ENCODE measurements at regions of chr5 and their contacts with region 1.

Region 1: DNA sequence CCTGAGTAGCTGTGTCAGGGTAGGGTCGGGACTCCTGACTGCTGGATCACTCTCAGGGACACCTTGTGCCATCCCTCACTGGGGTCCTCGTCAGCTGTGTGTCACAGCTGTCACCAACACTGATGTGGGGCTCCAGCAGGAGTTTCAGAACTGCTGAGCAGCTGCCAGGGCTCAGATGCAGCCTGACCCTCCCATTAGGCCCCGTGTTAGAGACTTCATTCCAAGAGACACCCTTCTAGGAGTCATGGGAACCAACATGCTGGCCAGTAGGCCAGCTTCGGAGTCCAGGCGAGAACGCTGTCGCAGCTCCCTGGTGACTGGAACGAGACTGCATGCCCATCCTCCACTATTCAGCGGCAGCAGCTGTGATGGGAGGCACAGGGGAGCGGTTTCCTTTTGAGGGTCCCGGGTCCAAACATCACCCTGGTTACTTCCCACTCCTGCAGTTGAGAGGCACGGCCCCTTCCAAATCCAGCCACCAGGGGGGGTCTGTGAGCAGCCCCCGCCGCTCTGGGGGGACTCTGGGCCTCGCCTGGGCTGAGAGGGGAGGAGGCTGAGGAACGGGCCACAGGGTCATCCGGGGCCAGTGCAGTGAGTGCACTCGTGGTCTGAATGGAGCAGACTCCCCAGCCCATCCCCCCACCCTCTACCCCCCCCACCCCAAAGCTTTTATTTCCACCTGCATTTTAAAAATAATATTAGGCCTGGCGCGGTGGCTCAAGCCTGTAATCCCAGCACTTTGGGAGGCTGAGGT is 12.6 kb upstream of the TCF7 start:
- DNase-seq: peak; percentile 67
- H3K4me3 Mint-ChIP-seq: no peak overlapping the region
- H3K27ac Mint-ChIP-seq: no peak overlapping the region
- H3K4me1 Mint-ChIP-seq: peaks cover 7% of the 10 kb centered on the region
- H3K27me3 Mint-ChIP-seq: no peaks in the 10 kb centered on the region
- CTCF ChIP-seq: peak; percentile 99

Region 2: DNA sequence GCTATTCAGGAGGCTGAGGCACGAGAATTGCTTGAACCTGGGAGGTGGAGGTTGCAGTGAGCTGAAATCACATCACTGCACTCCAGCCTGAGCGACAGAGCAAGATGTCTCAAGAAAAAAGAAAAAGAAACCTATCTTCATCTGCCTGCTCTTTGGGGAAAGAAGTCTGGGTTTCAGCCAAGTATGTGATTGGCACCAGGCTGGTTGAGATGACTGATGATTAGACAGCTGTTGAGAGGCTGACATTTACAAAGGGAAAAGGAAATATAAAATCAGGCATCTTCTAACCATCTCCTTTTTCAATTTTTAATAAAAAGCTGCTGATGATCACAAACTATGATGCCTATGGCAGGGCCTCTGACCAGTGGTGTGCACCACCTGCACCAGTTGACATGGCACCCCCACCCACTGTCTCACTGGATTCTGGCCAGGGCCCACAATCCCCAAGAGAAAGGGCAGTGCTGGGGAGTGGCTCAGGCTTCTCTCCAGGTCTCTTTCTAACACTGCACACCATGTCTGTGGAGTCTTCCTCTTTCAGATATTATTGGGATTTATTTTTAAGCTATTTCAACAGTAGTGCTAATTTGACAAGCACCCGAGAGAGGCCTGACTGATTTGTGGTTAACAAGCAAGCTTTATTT is 116.2 kb before region 1 on chr5:
- CTCF ChIA-PET with region 1: no interaction called
- POLR2A ChIA-PET with region 1: no interaction called
- intact Hi-C with region 1: no loop called
- DNase-seq: no peak
- H3K4me3 Mint-ChIP-seq: no peak overlapping the region
- H3K27ac Mint-ChIP-seq: no peak overlapping the region
- H3K4me1 Mint-ChIP-seq: peaks cover 9% of the 10 kb centered on the region
- H3K27me3 Mint-ChIP-seq: no peaks in the 10 kb centered on the region
- CTCF ChIP-seq: no peak

Region 3: GRCh38 chr5:134086943-134087305 is 14.9 kb before region 1 on chr5:
- CTCF ChIA-PET with region 1: interaction called, 12 read pairs
- POLR2A ChIA-PET with region 1: no interaction called
- intact Hi-C with region 1: no loop called
- DNase-seq: no peak
- H3K4me3 Mint-ChIP-seq: no peak overlapping the region
- H3K27ac Mint-ChIP-seq: no peak overlapping the region
- H3K4me1 Mint-ChIP-seq: peaks cover 6% of the 10 kb centered on the region
- H3K27me3 Mint-ChIP-seq: no peaks in the 10 kb centered on the region
- CTCF ChIP-seq: no peak

Region 4: GRCh38 chr5:134113902-134114875 is 12.3 kb after region 1 on chr5 and contains the start of gene TCF7:
- CTCF ChIA-PET with region 1: interaction called, 45 read pairs
- POLR2A ChIA-PET with region 1: interaction called, 3 read pairs
- intact Hi-C with region 1: no loop called
- DNase-seq: peak; percentile 90
- H3K4me3 Mint-ChIP-seq: peak within 1 kb of the TSS; percentile 74
- H3K27ac Mint-ChIP-seq: no peak within 1 kb of the TSS
- H3K4me1 Mint-ChIP-seq: peaks cover 17% of the 10 kb centered on the region
- H3K27me3 Mint-ChIP-seq: no peaks in the 10 kb centered on the region
- CTCF ChIP-seq: no peak
- total RNA-seq, gene TCF7: 0.29 and 0.42 TPM in 2 replicates

Region 5: GRCh38 chr5:134125039-134126015 is 23.5 kb after region 1 on chr5:
- CTCF ChIA-PET with region 1: interaction called, 19 read pairs
- POLR2A ChIA-PET with region 1: no interaction called
- intact Hi-C with region 1: no loop called
- DNase-seq: peak; percentile 92
- H3K4me3 Mint-ChIP-seq: no peak overlapping the region
- H3K27ac Mint-ChIP-seq: peak overlapping the region; percentile 8
- H3K4me1 Mint-ChIP-seq: peaks cover 18% of the 10 kb centered on the region
- H3K27me3 Mint-ChIP-seq: no peaks in the 10 kb centered on the region
- CTCF ChIP-seq: no peak

Region 6: GRCh38 chr5:135271533-135272310 is 1169.9 kb after region 1 on chr5:
- CTCF ChIA-PET with region 1: no interaction called
- POLR2A ChIA-PET with region 1: no interaction called
- intact Hi-C with region 1: no loop called
- DNase-seq: no peak
- H3K4me3 Mint-ChIP-seq: no peak overlapping the region
- H3K27ac Mint-ChIP-seq: no peak overlapping the region
- H3K4me1 Mint-ChIP-seq: no peaks in the 10 kb centered on the region
- H3K27me3 Mint-ChIP-seq: no peaks in the 10 kb centered on the region
- CTCF ChIP-seq: no peak